ENCODE measurements at regions of chr5 and their contacts with region 1.

Region 1: DNA sequence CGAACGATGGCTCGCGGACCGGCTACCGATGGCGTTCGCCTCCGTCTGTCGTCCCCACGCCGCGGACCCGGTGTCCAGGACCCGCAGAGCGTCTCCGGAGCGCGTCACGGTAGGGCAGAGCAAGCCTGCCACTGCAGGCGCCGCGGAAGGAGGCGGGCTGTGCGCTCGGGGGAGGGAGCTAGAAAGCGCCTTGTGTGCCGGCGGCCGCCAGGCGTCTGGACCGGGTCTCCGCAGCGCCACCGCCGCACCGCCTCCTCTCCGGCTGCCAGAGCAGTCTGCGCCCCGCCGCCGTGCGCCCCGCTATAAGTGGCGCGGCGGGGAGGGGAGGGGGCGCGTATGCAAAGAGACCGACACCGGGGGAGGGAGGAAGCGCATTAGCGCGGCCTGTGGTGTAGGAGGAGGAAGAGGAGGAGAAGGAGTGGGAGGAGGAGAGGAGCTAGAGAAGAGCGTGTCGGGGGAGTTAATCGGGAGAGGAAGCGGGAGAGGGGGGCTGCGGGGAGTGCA is at the start of gene ENC1:
- DNase-seq: peak; percentile 90
- H3K4me3 ChIP-seq: peak within 1 kb of the TSS; percentile 74
- H3K27ac ChIP-seq: peak within 1 kb of the TSS; percentile 21
- H3K4me1 ChIP-seq: peaks cover 35% of the 10 kb centered on the region
- CTCF ChIP-seq: peak; percentile 55
- total RNA-seq, gene ENC1: 19.4 and 25.9 TPM in 2 replicates

Region 2: DNA sequence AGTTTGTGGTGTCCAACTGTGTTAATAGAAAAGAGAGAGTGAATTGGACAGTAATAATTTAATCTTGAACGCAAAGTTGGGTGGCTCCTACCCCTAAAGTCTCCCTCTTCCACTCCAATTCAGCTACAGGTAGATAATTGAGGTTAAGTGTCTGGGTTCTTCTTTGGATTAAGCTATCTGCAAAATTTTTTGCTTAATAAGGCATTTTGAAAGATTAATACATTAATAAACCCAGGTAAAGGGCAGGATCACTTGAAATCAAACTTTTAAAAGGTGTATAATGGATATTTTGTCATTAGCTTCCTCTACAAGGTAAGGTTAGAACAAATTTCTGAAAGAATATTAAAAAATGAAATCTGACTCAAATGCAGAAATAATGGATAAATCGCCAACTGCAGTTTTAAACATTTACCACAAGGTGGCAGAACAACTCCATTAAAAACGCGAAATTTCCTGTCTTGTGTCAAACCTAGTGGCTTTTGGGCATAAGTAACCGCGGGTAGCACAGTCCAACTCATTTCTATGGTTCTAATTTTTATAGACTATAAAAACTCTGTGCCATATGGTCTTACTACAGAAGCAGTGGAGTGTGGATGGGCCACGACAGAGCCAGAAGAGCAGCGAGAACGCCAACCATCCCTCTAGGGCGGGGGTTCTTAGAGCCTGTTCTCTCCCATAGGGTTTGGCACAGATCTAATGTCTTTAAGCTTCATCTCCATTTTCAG is 738.0 kb before region 1 on chr5:
- CTCF ChIA-PET with region 1: no interaction called
- POLR2A ChIA-PET with region 1: interaction called, 3 read pairs
- intact Hi-C with region 1: loop called (anchors 1 kb)
- DNase-seq: peak; percentile 77
- H3K4me3 ChIP-seq: no peak overlapping the region
- H3K27ac ChIP-seq: no peak overlapping the region
- H3K4me1 ChIP-seq: peaks cover 4% of the 10 kb centered on the region
- CTCF ChIP-seq: peak; percentile 97

Region 3: GRCh38 chr5:74294231-74294705 is 346.2 kb before region 1 on chr5:
- CTCF ChIA-PET with region 1: no interaction called
- POLR2A ChIA-PET with region 1: no interaction called
- intact Hi-C with region 1: loop called (anchors 10 kb)
- DNase-seq: peak; percentile 3
- H3K4me3 ChIP-seq: no peak overlapping the region
- H3K27ac ChIP-seq: no peak overlapping the region
- H3K4me1 ChIP-seq: peaks cover 5% of the 10 kb centered on the region
- CTCF ChIP-seq: no peak

Region 4: DNA sequence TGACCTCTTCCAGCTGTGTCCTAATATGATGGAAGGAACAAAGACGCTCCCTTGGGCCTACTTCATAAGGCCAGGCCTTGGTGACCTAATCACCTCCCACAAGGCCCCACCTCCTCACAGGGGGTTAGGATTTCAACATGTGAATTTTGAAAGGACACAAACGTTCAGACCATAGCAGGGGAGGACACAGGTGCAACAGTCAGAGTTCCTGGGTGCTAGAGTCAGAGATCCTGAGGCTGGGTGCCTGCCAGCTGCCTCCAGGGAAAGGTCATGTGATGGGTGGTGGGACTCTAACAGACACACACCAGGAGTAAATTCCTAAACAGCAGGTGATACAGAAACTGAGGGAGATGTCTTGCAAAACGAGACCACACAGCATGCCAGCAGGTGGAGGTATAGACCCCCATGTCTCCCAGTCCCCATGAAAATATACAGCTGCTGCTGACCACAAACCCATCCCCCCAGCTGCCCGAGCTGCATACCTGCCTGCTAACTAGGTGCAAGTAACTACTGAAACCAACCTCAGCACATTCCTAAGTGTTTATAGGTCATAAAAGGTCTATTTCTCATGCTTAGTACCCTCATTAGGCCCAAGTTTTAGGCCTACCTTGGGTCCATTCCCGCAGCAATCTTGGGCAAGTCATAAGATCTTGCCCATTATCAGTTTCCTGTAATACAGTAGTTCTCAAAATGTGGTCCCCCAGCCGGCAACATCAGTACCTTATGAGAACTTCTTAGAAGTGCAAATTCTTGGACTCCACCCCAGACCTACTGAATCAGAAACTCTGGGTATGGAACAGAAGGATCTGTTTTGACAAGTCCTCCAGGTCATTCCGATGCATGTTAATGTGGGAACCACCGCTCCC is 245.4 kb before region 1 on chr5:
- CTCF ChIA-PET with region 1: interaction called, 3 read pairs
- POLR2A ChIA-PET with region 1: interaction called, 5 read pairs
- intact Hi-C with region 1: loop called (anchors 1 kb)
- DNase-seq: peak; percentile 39
- H3K4me3 ChIP-seq: no peak overlapping the region
- H3K27ac ChIP-seq: no peak overlapping the region
- H3K4me1 ChIP-seq: peaks cover 39% of the 10 kb centered on the region
- CTCF ChIP-seq: peak; percentile 55

Region 5: DNA sequence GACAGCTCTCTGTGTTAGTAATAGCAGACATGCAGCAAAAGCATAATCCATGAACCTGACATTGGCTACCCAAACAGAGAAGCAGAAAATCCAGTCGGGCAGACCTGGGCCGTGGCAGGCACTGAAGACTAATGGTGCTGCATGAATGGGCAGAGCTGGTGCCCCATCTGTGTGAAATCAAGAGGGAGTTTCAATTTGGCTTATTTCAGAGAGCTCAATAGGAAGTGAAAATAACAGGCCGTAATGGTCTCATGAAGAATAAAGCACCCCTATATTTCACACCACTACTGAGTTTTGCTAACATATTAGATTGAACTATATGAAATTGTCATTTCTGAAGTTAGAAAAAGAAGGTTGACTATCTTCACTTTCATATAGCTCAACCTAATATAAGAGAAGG is 149.7 kb before region 1 on chr5:
- CTCF ChIA-PET with region 1: interaction called, 6 read pairs
- POLR2A ChIA-PET with region 1: interaction called, 17 read pairs
- intact Hi-C with region 1: loop called (anchors 1 kb)
- DNase-seq: peak; percentile 88
- H3K4me3 ChIP-seq: peak overlapping the region; percentile 11
- H3K27ac ChIP-seq: peak overlapping the region; percentile 88
- H3K4me1 ChIP-seq: peaks cover 42% of the 10 kb centered on the region
- CTCF ChIP-seq: no peak

Region 6: DNA sequence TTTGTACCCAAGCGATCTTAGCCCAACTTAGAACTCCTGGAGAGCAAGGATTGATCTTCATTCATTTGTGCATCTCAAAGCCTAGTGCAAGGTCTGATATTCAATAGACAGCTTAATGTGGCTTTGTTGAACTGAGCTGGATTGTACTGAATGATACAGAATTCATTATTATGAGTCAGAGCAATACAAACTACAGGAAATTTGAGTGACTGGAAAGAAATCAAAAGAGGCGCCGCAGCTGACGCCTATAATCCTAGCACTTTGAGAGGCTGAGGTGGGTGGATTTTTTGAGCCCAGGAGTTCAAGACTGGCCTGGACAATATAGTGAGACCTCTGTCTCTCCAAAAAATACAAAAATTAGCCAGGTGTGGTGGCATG is 58.5 kb before region 1 on chr5:
- CTCF ChIA-PET with region 1: no interaction called
- POLR2A ChIA-PET with region 1: no interaction called
- intact Hi-C with region 1: no loop called
- DNase-seq: no peak
- H3K4me3 ChIP-seq: no peak overlapping the region
- H3K27ac ChIP-seq: no peak overlapping the region
- H3K4me1 ChIP-seq: peaks cover 6% of the 10 kb centered on the region
- CTCF ChIP-seq: no peak

Region 7: DNA sequence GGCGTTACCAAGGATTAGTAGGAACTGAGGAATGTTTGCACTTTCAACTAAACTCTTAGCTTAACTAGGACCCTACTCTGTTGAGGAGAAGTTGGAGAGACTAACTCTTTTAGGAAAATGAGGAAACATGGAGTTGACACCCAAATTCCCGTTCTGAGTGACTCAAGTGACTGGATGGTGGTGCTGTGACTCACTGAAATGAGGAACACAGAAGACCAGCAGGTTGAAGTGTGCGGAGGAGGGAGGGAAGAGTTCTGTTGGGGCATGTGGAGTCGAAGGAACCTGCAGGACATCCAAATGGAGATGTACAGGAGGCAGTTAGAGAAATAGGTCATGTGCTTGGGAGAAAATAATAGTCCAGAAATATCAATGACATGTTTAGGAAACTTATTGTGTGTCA is 52.7 kb after region 1 on chr5:
- CTCF ChIA-PET with region 1: no interaction called
- POLR2A ChIA-PET with region 1: no interaction called
- intact Hi-C with region 1: no loop called
- DNase-seq: no peak
- H3K4me3 ChIP-seq: no peak overlapping the region
- H3K27ac ChIP-seq: no peak overlapping the region
- H3K4me1 ChIP-seq: no peaks in the 10 kb centered on the region
- CTCF ChIP-seq: no peak